Heart left ventricle (tissue), 16 donors: ENCODE measurements at regions of chr3 and their contacts with region 1.

Region 1: DNA sequence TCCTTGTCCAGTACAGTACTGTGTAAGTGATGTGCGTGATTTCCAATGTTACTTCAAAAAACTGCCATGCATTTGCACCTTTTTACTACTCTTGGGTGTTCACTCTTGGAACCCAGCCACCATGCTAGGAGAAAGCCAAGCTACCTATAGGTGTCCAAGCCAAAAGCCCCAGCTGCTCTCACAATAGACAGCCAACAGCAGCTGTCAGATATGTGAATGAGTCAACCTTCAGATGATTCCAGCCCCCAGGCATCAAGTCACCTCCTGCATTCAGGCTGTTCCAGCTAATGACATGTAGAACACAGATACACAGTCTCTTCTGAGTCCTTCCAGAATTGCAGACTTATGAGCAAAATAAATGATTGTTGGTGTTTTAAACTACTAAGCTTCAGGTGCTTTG is 417.7 kb upstream of the TGFBR2 start:
- DNase-seq: peak in 4 of 5 donors; percentile 24 to 38 (median 26)
- ATAC-seq: peak in 3 of 4 donors; percentile 81 to 83 (median 82)
- H3K4me3 ChIP-seq: no peak overlapping the region
- H3K27ac ChIP-seq: no peak overlapping the region
- H3K4me1 ChIP-seq: peaks cover 0 to 33% (median 5%) of the 10 kb centered on the region in 12 donors
- H3K27me3 ChIP-seq: no peaks in the 10 kb centered on the region
- CTCF ChIP-seq: no peak
- POLR2A ChIP-seq: no peak

Region 2: DNA sequence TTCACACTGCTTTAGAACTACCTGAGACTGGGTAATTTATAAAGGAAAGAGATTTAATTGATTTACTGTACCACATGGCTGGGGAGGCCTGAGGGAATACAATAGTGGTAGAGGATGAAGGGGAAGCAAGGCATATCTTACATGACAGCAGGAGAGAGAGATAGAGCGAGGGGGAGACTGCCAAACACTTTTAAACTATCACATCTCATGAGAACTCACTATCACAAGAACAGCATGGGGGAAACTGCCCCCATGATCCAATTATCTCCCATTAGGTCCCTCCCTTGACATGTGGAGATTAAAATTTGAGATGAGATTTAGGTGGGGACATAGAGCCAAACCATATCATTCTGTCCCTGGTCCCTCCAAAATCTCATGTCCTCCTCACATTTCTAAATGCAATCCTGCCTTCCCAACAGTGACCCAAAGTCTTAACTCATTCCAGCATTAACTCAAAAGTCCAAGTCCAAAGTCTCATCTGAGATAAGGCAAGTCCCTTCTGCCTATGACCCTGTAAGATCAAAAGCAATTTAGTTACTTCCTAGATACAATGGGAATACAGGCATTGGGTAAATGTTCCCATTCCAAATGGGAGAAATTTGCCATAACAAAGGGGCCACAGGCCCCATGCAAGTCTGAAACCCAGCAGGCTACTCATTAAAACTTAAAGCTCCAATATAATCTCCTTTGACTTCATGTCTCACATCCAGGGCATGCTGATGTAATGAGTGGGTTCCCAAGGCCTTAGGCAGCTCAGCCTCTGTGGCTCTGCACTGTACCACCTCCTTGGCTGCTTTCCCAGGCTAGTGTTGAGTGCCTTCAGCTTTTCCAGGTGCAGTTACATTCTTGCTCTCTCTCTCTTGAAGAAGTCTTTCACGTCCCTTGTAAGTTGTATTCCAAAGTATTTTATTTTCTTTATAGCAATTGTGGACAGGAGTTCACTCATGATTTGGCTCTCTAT is 64.0 kb before region 1 on chr3:
- intact Hi-C with region 1: loop called in 1 of 10 experiments (anchors 5 kb)
- DNase-seq: peak in 4 of 5 donors; percentile 34 to 60 (median 43)
- ATAC-seq: peak in 3 of 4 donors; percentile 61 to 81 (median 76)
- H3K4me3 ChIP-seq: no peak overlapping the region
- H3K27ac ChIP-seq: no peak overlapping the region
- H3K4me1 ChIP-seq: peaks cover 0 to 8% (median 0%) of the 10 kb centered on the region in 12 donors
- H3K27me3 ChIP-seq: no peaks in the 10 kb centered on the region
- CTCF ChIP-seq: no peak
- POLR2A ChIP-seq: no peak

Region 3: DNA sequence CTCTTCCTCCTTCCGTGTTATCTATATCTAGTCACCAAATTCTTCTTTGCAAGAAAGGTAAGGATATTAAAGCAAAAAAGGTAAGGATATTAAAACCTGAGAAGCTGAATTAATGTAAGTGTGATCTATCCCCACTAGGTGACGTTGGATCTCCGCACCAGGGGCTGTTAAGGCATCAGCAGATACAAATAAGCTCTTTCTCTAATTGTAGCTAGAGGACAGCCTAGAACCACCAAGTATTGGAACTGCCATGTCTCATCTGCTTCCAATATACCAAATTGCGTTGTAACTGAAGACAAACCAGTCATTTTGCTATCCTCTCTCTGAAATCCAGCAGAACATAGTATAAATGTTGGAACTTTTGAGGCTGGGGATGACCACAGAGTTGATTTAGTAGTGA is 53.5 kb before region 1 on chr3:
- intact Hi-C with region 1: loop called in 2 of 10 experiments (anchors 5 to 10 kb)
- DNase-seq: no peak
- ATAC-seq: peak in 3 of 4 donors; percentile 48 to 77 (median 52)
- H3K4me3 ChIP-seq: no peak overlapping the region
- H3K27ac ChIP-seq: no peak overlapping the region
- H3K4me1 ChIP-seq: peaks cover 0 to 5% (median 1%) of the 10 kb centered on the region in 12 donors
- H3K27me3 ChIP-seq: no peaks in the 10 kb centered on the region
- CTCF ChIP-seq: peak in 10 of 12 donors; percentile 26 to 63 (median 42)
- POLR2A ChIP-seq: no peak